ENCODE measurements at regions of chr17 and their contacts with region 1.

Region 1: DNA sequence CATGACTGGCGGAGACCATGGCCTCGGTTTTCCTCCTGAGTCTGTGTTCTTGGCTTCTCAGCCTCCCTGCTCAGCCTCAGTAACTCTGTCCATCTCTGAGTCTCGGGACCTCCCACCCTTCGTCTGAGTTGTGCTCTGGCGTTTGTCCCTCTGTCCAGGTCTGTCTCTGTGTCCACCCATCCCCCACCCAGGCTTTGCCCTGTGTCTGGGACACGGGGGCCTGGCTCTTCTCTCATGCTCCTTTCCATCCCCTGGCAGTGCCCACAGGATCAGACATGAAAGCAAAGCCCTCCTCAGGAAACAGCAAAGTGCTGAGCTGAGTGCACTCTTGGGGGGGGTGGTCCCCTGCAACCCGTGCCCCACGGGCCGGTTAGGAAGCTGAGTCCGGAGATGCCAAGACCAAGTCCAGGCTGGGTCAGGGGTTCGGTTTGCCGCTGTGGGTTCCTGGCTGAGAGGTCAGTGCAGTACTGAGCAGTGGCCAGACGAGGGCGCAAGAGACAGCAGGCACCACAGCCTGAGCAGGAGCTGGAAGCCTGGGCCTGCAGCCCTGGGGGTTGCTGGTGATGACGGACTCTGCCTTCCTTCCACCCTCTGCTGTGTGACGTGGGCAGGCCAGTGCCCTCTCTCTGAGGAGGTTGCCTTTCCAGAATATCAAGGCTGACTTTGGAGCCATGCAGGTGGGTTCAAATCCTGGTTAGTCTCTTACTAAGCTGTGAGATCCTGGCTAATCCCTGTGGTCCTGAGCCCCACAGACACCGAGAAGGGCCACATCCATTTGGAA is 2.5 kb downstream of the P2RX1 start:
- DNase-seq: peak; percentile 82
- H3K4me3 Mint-ChIP-seq: no peak overlapping the region
- H3K27ac Mint-ChIP-seq: peak overlapping the region; percentile 10
- H3K4me1 Mint-ChIP-seq: peaks cover 48% of the 10 kb centered on the region
- H3K27me3 Mint-ChIP-seq: no peaks in the 10 kb centered on the region

Region 2: DNA sequence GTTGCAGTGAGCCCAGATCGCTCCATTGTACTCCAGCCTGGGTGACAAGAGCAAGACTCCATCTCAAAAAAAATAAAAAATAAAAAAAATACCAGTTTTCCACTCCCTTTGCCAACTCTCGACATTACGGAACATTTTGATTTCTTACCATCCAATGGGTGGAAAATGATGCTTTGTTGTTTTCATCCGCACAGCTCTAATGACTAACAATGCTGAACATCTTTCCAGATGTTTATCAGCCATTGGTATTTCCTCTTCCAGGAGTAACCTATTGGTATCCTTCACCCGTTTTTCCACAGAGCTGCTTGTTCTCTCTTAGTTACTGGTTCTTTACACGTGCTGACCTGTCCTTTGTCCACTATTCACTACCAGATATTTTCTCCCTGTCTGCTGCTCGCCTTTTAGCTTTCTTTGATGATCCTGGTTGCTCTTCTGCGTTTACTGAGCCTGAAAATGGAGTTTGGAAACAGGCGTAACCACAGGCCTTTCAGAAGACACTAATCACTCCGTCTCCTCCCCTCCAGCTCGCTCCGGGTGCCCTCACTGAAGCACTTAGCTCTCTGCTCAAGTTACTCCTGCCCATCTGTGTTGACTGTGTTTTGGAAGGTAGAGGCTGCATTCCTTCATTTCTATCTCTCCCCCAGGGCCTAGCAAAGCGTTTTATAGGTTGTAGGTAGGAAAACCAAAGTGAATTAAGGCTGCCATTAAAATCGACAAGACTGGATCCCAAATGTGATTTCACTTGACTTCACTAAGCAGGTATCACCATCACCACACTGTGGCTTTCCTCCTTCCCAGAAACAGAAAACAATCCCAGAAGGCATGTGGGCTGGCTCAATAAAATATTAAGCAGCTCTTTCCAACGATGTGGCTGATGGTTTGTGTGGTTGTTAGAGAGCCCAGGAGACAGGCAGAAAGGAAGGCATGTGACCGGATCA is 286.6 kb before region 1 on chr17:
- CTCF ChIA-PET with region 1: no interaction called
- POLR2A ChIA-PET with region 1: no interaction called
- DNase-seq: no peak
- H3K4me3 Mint-ChIP-seq: no peak overlapping the region
- H3K27ac Mint-ChIP-seq: no peak overlapping the region
- H3K4me1 Mint-ChIP-seq: no peaks in the 10 kb centered on the region
- H3K27me3 Mint-ChIP-seq: no peaks in the 10 kb centered on the region

Region 3: DNA sequence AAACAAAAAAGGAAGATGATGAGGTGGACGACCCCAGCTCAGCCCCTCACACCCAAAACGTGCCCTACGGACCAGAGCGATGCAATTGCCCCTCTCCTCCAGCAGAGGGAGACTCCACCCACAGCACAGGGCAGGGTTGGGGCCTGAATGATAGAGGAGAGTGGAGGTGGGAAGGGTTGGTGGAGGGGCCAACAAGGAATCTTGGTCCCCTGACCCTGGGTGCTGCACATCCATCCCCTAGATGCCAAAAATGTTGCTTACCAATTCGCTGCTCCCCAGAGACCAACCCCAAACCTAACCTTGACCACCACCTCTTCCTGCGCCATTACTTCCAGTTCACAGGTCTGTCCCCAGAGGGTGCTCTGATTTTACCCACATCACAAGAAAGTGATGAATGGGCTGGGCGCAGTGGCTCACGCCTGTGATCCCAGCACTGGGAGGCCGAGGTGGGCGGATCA is 230.6 kb before region 1 on chr17:
- CTCF ChIA-PET with region 1: no interaction called
- POLR2A ChIA-PET with region 1: no interaction called
- DNase-seq: peak; percentile 67
- H3K4me3 Mint-ChIP-seq: no peak overlapping the region
- H3K27ac Mint-ChIP-seq: peak overlapping the region; percentile 71
- H3K4me1 Mint-ChIP-seq: peaks cover 28% of the 10 kb centered on the region
- H3K27me3 Mint-ChIP-seq: no peaks in the 10 kb centered on the region

Region 4: DNA sequence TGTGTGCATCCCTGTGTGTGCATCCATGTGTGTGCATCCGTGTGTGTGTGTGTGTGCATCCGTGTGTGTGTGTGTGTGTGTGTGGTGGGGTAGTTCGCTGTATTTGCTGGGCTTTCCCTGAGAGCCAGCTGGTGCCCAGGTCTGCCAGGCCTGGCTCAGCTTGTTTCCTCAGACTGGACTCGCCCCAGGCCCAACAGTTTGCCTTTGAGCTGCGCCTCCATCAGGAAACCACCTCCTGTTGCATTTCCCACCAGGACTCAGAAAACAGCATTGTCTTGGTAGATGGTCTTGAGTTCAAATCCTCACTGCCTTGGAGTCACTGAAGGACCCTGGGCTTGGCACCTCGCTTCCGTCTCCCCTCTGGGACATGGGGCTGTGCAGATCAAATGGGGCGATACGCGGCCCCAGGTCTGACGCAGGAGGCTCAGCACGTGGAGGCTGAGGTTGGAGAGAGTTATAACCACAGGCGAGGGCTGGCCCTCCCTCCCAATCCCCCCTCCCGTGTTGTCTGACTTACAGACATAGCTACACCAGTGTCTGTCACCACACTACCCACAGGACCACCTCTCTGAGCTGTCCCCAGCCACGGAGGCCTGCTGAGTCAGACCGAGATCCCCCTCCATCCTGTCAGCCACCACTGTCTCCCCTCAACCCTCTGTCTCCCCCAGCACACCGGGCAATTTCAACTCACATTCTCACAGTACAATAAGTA is 117.5 kb before region 1 on chr17:
- CTCF ChIA-PET with region 1: no interaction called
- POLR2A ChIA-PET with region 1: no interaction called
- DNase-seq: peak; percentile 67
- H3K4me3 Mint-ChIP-seq: no peak overlapping the region
- H3K27ac Mint-ChIP-seq: peak overlapping the region; percentile 27
- H3K4me1 Mint-ChIP-seq: peaks cover 35% of the 10 kb centered on the region
- H3K27me3 Mint-ChIP-seq: no peaks in the 10 kb centered on the region

Region 5: GRCh38 chr17:3947318-3947810 is 33.6 kb after region 1 on chr17:
- CTCF ChIA-PET with region 1: interaction called, 10 read pairs
- POLR2A ChIA-PET with region 1: no interaction called
- DNase-seq: no peak
- H3K4me3 Mint-ChIP-seq: no peak overlapping the region
- H3K27ac Mint-ChIP-seq: no peak overlapping the region
- H3K4me1 Mint-ChIP-seq: peaks cover 2% of the 10 kb centered on the region
- H3K27me3 Mint-ChIP-seq: no peaks in the 10 kb centered on the region

Region 6: DNA sequence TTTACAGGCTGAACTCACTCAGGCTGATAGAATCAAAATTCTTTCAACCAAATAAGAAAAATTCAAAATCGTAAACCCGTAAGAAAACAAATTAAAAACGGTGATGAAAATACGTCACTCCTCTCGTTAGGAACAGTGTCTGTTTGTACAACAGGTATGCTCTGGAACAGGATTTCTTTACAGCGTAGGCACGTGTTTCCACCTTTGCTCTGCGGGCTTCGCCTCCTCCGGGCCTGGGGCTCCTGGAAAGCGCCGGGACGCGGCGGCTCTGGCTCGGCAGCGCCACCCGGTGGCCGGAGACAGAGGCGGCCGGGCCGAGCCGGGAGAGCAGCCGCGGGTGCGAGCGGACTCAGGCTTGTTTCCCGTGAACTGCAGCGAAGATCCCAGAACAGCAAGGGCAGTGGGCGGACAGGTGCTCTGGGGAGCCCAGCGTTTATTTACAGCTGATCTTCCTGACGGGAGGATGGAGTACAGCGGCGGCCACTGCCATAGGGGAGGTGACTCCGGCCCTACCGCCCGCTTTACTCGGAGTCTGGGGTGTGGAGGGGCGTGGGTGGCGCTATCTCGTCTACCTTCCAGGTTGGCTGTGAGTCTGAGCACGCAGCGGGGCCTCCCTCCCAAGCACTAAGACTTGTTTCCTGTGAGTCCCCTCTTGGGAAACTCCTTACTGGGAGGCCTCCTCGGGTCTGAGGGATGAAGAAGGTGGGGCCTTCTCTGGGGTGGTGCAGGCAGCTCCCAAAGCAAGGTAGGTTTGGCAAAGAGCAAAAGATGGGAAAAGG is 91.0 kb after region 1 on chr17:
- CTCF ChIA-PET with region 1: interaction called, 18 read pairs
- POLR2A ChIA-PET with region 1: no interaction called
- DNase-seq: peak; percentile 59
- H3K4me3 Mint-ChIP-seq: no peak overlapping the region
- H3K27ac Mint-ChIP-seq: peak overlapping the region; percentile 60
- H3K4me1 Mint-ChIP-seq: peaks cover 5% of the 10 kb centered on the region
- H3K27me3 Mint-ChIP-seq: peaks cover 6% of the 10 kb centered on the region

Measured in activated CD4-positive, alpha-beta T cell treated with anti-CD3 and anti-CD28 coated beads, Interleukin-2, amount 10 ng/mL, durations not matched to agents 7 days and 5 days (primary cell).